SK-N-SH (cell line): ENCODE measurements at regions of chr2 and their contacts with region 1.

Region 1: GRCh38 chr2:19369341-19369955 is 11.0 kb upstream of the OSR1 start:
- DNase-seq: no peak
- H3K4me3 ChIP-seq: no peak overlapping the region
- H3K27ac ChIP-seq: no peak overlapping the region
- H3K4me1 ChIP-seq: no peaks in the 10 kb centered on the region; a peak in 1 of 4 replicates
- H3K27me3 ChIP-seq: peaks cover 15% of the 10 kb centered on the region; the same call in 1 of the 2 replicates
- CTCF ChIP-seq: peak; percentile 59
- EP300 ChIP-seq: no peak
- RAD21 ChIP-seq: peak; percentile 43

Region 2: DNA sequence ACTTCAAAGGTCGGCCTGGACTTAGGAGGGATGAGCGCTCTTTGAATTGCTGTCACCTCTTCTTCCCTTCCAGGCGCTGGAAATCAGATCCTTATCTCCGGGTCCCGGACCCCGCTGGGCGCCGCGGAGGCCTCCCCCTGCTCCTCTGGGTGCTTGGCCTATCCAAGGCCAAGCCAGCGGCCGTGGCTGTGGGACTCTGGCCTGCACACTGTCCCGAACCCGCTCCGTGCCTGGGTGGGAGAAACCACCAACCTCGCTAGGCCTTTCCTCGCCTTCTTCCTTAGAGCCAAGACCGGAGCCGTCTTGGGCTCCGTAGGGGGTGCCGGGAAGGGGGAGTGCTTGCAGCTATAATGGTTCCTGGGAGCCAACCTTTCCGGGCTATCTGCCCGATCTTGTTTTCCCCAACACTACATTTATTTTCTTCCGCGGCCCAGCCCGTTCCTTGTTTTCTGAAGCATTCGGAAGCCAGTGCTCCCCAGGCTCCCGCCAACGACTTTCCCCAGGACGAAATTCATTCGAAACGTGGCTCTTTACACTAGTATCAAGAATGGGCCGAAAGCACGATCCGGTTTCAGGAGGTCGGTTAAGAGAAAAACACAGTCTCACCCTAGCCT is 13.4 kb before region 1 on chr2:
- CTCF ChIA-PET with region 1: interaction called, 16 read pairs
- POLR2A ChIA-PET with region 1: no interaction called
- DNase-seq: peak; percentile 61
- H3K4me3 ChIP-seq: peak overlapping the region; percentile 75 to 94
- H3K27ac ChIP-seq: peak overlapping the region in 1 of 2 experiments; percentile 63; a peak in 2 of 4 replicates
- H3K4me1 ChIP-seq: peaks cover 5 to 16% of the 10 kb centered on the region in 2 experiments; a peak in 1 of 4 replicates
- H3K27me3 ChIP-seq: no peaks in the 10 kb centered on the region
- CTCF ChIP-seq: no peak
- EP300 ChIP-seq: no peak
- RAD21 ChIP-seq: no peak